ENCODE measurements at regions of chr17 and their contacts with region 1.

Region 1: DNA sequence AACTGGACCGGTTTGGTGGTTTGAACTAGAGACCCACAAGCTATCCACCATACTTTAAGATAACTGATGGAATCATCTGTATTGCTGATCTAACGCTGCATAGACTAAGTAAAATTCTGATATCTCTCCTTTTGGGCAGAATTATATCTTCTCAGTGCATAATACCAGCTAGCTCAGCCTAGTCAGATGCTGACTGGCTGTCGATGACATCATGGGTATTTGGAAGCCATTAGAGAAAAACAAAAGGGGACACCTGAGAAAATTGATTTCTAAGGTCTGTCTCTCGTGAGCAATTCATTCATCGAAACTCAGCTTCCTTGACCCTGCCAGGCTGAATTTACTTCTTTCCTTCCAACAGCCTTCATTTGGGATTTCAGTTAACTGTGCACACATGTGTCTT is 263.0 kb upstream of the CCL2 start:
- DNase-seq: no peak
- ATAC-seq: no peak
- H3K4me3 ChIP-seq: no peak overlapping the region
- H3K27ac ChIP-seq: no peak overlapping the region
- H3K4me1 ChIP-seq: no peaks in the 10 kb centered on the region
- H3K27me3 ChIP-seq: no peaks in the 10 kb centered on the region; the same call in 1 of the 2 replicates
- CTCF ChIP-seq: no peak

Region 2: DNA sequence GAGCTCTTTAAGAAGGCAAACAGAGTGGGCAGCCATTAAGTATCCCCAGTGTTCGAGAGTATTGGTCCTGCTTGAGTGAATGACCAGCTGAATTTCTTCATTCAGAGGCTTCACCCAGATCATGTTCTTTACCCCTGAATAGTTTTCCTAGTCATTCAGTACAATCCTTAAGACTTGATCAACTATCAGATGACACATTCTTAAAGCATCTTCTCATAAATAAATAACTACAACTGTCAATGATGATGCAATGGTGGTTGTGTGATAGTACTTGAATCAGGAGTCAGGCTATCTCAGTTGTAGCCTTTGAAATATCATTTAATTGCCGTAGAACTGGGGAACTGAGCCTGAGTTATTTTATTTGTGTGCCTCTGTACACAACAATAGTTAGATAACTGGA is 153.8 kb before region 1 on chr17:
- CTCF ChIA-PET with region 1: no interaction called
- POLR2A ChIA-PET with region 1: interaction called, 12 read pairs
- in situ Hi-C with region 1: no loop called
- intact Hi-C with region 1: no loop called
- DNase-seq: no peak
- ATAC-seq: no peak
- H3K4me3 ChIP-seq: no peak overlapping the region
- H3K27ac ChIP-seq: no peak overlapping the region
- H3K4me1 ChIP-seq: no peaks in the 10 kb centered on the region
- H3K27me3 ChIP-seq: no peaks in the 10 kb centered on the region; the same call in 1 of the 2 replicates
- CTCF ChIP-seq: no peak

Region 3: DNA sequence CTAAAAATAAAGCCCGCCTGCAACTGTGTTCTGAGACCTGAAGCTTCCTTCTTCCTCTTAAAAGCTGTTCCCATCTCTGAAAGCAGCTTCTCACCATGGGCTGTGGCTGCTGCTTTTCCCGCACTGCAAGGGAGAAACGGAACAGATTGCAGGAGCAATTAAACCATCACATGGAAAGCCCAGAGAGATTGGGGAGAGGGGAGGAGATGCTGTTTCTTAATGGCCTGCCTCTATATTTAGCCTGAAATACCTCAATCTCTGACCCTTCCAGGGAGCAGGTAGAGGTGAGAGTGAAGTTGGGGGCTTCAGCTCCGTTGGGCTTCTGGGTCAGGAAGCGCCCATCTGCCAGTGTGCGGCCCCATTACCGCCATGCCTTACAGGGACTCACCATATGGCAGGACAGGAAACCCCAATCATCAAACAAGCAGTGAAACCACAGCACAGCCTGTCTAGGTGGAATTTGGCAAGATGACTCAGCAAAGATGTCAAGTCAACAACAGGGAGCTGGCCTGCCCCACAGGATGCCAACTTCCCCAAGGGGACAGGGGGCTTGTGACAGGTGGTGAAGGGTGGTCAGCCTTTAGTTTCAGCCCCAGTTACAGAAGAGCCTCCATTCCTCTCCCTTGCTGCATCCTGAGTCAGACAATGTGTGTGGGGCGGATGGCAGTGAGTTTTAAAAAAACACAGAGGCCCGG is 23.6 kb before region 1 on chr17:
- CTCF ChIA-PET with region 1: no interaction called
- POLR2A ChIA-PET with region 1: no interaction called
- in situ Hi-C with region 1: no loop called
- intact Hi-C with region 1: no loop called
- DNase-seq: no peak
- ATAC-seq: no peak
- H3K4me3 ChIP-seq: no peak overlapping the region
- H3K27ac ChIP-seq: no peak overlapping the region
- H3K4me1 ChIP-seq: no peaks in the 10 kb centered on the region
- H3K27me3 ChIP-seq: 0 out of 2 replicates have a peak, but pooled peaks cover 2% of the 10 kb centered on the region
- CTCF ChIP-seq: no peak